ENCODE measurements at regions of chr1 and their contacts with region 1.

Region 1: DNA sequence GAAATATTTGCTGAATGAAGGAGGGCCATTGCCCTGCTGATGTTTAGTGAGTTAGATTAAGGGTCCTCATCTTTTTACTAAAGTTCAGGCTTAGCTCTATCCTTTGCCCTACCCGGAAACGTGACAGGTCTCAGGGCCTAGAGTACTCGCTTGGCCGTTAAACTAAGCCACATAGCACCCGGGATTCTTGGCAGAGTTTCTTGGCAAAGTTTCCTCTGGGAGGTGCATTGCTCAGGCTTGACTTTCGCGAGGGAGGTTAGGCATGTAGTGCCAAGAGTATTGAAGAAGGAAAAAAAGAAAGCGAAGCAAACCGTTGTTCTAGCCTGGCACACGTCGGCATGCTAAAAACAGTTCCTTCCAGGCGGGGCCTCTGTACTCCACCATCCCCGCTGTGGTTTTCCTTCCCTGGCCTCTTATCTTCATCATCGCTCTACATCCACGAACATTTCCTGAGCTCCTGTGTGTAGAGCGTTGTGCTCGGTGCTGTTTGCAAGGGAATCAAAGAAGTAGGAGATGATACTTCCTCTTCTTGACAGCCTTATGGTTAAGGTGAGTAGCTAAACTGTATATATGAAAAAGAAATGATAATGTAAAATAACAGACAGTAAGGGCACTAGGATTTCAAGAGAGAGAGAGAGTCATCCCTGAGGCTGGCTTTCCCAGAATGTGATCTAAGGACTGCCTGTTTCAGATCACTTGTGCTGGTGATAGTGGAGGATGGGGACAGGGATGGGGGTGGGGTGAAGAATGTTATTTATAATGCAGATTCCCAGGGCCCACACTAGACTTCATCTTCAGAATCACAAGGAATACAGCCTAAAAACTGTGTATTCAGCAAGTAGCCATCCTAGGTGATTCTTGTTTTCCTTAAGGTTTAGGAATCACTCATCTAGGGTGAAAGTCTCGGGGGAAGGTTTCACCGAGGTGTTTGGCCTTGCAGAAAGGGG is 18.8 kb downstream of the RNF220 start:
- DNase-seq: peak; percentile 98
- H3K4me3 Mint-ChIP-seq: peak overlapping the region; percentile 73
- H3K27ac Mint-ChIP-seq: peak overlapping the region; percentile 89
- H3K4me1 Mint-ChIP-seq: peaks cover 36% of the 10 kb centered on the region
- H3K27me3 Mint-ChIP-seq: no peaks in the 10 kb centered on the region
- CTCF ChIP-seq: no peak

Region 2: GRCh38 chr1:44316231-44316759 is 107.6 kb before region 1 on chr1:
- CTCF ChIA-PET with region 1: no interaction called
- POLR2A ChIA-PET with region 1: no interaction called
- intact Hi-C with region 1: no loop called
- DNase-seq: no peak
- H3K4me3 Mint-ChIP-seq: no peak overlapping the region
- H3K27ac Mint-ChIP-seq: no peak overlapping the region
- H3K4me1 Mint-ChIP-seq: no peaks in the 10 kb centered on the region
- H3K27me3 Mint-ChIP-seq: no peaks in the 10 kb centered on the region
- CTCF ChIP-seq: no peak

Region 3: GRCh38 chr1:44447051-44447810 is 23.4 kb after region 1 on chr1:
- CTCF ChIA-PET with region 1: interaction called, 3 read pairs
- POLR2A ChIA-PET with region 1: interaction called, 17 read pairs
- intact Hi-C with region 1: no loop called
- DNase-seq: peak; percentile 35
- H3K4me3 Mint-ChIP-seq: no peak overlapping the region
- H3K27ac Mint-ChIP-seq: peak overlapping the region; percentile 64
- H3K4me1 Mint-ChIP-seq: peaks cover 18% of the 10 kb centered on the region
- H3K27me3 Mint-ChIP-seq: no peaks in the 10 kb centered on the region
- CTCF ChIP-seq: no peak

Region 4: GRCh38 chr1:44519035-44519676 is 95.3 kb after region 1 on chr1:
- CTCF ChIA-PET with region 1: no interaction called
- POLR2A ChIA-PET with region 1: no interaction called
- intact Hi-C with region 1: no loop called
- DNase-seq: no peak
- H3K4me3 Mint-ChIP-seq: no peak overlapping the region
- H3K27ac Mint-ChIP-seq: no peak overlapping the region
- H3K4me1 Mint-ChIP-seq: peaks cover 10% of the 10 kb centered on the region
- H3K27me3 Mint-ChIP-seq: no peaks in the 10 kb centered on the region
- CTCF ChIP-seq: no peak

Measured in MCF 10A (cell line).